Heart right ventricle (tissue), 16 donors: ENCODE measurements at regions of chr6 and their contacts with region 1.

Region 1: GRCh38 chr6:24283043-24283985 is 74.5 kb downstream of the DCDC2 start:
- DNase-seq: peak; percentile 40 to 66
- ATAC-seq: peak; percentile 81 to 94 (median 87)
- H3K4me3 ChIP-seq: peak overlapping the region in 2 of 10 donors; percentile 3 to 18
- H3K27ac ChIP-seq: no peak overlapping the region
- H3K4me1 ChIP-seq: peaks cover 0 to 15% (median 7%) of the 10 kb centered on the region in 9 donors
- H3K27me3 ChIP-seq: peaks cover 0 to 26% (median 11%) of the 10 kb centered on the region in 7 donors
- CTCF ChIP-seq: peak in 8 of 9 donors; percentile 25 to 71 (median 48)

Region 2: DNA sequence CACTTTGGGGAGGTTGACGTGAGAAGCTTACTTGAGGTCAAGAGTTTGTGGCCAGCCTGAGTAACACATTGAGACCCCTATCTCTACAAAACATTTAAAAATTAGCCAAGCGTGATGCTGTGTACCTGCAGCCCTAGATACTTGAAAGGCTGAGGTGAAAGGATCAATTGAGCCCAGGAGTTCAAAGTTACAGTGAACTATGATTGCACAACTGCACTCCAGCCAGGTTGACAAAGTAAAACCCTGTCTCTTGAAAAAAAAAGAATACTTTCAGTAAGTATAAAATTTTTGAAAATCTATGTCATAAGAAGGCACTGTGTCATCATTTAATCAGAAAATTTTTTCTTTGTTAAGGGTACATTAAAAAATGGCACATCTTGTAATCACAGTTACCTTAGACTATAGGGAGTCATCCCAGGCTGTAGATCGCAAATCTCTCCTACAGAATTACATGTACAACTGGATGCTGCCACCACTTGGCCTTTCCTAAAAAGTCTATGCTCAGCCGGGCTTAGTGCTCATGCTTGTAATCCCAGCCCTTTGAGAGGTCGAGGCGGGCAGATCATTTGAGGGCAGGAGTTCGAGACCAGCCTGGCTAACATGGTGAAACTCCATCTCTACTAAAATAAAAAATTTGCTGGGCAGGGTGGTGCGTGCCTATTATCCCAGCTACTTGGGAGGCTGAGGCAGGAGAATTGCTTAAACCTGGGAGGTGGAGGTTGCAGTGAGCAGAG is 102.4 kb after region 1 on chr6:
- intact Hi-C with region 1: loop called in 9 of 10 experiments (anchors 2 to 10 kb)
- DNase-seq: no peak
- ATAC-seq: no peak
- H3K4me3 ChIP-seq: no peak overlapping the region
- H3K27ac ChIP-seq: no peak overlapping the region
- H3K4me1 ChIP-seq: no peaks in the 10 kb centered on the region
- H3K27me3 ChIP-seq: peaks cover 0 to 12% (median 0%) of the 10 kb centered on the region in 7 donors
- CTCF ChIP-seq: no peak

Region 3: DNA sequence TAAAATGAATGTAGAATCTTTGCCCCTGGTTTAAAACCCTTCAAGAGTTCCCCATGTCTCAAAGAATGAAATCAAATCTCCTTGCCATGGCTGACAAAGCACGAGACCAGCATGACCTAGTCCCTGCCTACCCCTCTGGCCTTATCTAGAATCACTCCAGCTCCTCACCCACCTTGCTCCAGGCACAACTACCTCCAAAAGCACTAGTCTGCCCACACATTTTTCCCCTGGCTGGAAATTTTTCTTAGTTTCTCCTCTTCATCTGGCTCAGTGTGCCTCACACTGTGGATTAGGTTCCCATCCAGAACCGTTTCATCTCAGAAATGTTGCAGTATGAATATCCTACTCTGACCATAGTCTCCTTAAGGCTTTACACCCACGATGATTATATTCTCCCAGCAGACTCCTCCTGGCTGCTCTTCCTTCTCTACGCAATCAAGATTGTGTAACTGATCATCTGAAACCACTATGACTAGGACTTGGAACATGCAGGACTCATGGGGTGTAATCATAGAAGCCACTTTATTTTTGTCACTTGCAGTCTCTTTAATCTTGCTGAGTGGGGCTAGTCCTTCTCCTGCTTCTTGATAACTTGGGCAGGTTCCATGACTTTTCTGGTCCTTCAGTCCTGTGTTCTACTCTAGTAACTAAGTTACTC is 111.6 kb after region 1 on chr6:
- intact Hi-C with region 1: loop called in 3 of 10 experiments (anchors 5 to 10 kb)
- DNase-seq: no peak
- ATAC-seq: peak in 1 of 8 donors; percentile 18
- H3K4me3 ChIP-seq: no peak overlapping the region
- H3K27ac ChIP-seq: no peak overlapping the region
- H3K4me1 ChIP-seq: no peaks in the 10 kb centered on the region
- H3K27me3 ChIP-seq: peaks cover 0 to 44% (median 29%) of the 10 kb centered on the region in 7 donors
- CTCF ChIP-seq: no peak